Spleen (tissue), 13 donors: ENCODE measurements at regions of chr2 and their contacts with region 1.

Region 1: DNA sequence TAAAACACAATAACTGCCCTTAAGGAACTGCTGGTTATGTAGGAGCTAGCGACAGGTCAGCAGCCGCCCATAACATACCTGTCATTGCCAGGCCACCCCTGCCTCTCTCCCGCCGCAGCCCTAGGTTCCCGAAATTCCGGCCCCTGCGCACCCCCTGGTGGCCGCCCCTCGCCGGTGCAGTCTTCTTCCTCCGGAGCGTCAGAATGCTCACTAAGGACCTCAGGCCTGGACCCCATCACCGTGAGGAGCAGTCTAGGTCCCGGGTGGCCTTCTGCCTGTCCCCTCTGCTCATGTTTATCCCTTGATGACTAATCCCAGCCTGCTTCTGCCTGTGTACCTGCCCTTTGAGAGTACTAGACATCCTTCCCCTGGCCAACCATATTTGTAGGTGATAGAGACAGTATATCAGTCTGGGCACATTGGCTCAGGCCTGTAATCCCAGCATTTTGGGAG is 115.7 kb upstream of the SLC1A4 start:
- DNase-seq: peak; percentile 95
- H3K4me3 ChIP-seq: peak overlapping the region in 2 of 8 donors; percentile 9 to 54
- H3K27ac ChIP-seq: no peak overlapping the region
- H3K4me1 ChIP-seq: peaks cover 0 to 17% (median 9%) of the 10 kb centered on the region in 6 donors
- H3K27me3 ChIP-seq: no peaks in the 10 kb centered on the region
- CTCF ChIP-seq: peak; percentile 81 to 96 (median 95)
- POLR2A ChIP-seq: no peak

Region 2: GRCh38 chr2:64516628-64517510 is 356.6 kb before region 1 on chr2:
- intact Hi-C with region 1: loop called (anchors 5 kb)
- DNase-seq: no peak
- H3K4me3 ChIP-seq: no peak overlapping the region
- H3K27ac ChIP-seq: no peak overlapping the region
- H3K4me1 ChIP-seq: no peaks in the 10 kb centered on the region
- H3K27me3 ChIP-seq: no peaks in the 10 kb centered on the region
- CTCF ChIP-seq: no peak
- POLR2A ChIP-seq: no peak

Region 3: DNA sequence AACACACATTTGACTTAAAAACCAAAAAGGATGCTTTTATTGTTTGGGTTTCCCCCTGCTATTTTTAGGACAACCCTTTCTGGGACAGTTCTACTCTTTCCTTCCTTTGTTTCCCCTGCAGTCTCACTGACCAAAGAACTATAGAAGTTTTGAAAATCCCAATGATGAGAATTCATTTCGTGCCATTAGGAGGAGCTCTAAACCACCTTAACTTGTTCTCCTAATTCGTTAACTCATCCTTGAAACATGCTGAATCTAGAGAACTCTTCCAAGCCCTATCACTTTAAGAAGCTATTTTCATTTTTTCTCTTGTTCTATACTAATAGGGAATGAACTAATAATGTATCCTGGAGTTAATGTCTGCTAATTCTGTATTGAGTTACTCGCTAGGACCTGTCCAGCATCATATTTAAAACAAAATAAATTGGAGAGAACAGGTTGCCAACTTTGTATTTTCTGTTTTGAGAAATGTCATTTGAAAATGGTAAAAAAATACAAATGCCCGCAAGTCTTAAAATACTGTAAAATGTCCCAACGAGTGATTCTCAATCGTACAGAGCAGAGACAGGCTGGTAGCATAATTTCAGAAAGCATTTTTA is 286.5 kb before region 1 on chr2:
- intact Hi-C with region 1: loop called (anchors 5 kb)
- DNase-seq: no peak
- H3K4me3 ChIP-seq: no peak overlapping the region
- H3K27ac ChIP-seq: peak overlapping the region in 5 of 8 donors; percentile 3 to 58 (median 34)
- H3K4me1 ChIP-seq: peaks cover 0 to 29% (median 16%) of the 10 kb centered on the region in 6 donors
- H3K27me3 ChIP-seq: no peaks in the 10 kb centered on the region
- CTCF ChIP-seq: peak; percentile 36 to 75 (median 59)
- POLR2A ChIP-seq: no peak